Posterior cingulate gyrus (tissue), 11 donors: ENCODE measurements at regions of chr2 and their contacts with region 1.

Region 1: GRCh38 chr2:191501561-191502168 is 176.3 kb upstream of the NABP1 start:
- DNase-seq: no peak

Region 2: GRCh38 chr2:191165176-191165643 is 336.5 kb before region 1 on chr2:
- intact Hi-C with region 1: loop called (anchors 1 kb)
- DNase-seq: no peak

Region 3: DNA sequence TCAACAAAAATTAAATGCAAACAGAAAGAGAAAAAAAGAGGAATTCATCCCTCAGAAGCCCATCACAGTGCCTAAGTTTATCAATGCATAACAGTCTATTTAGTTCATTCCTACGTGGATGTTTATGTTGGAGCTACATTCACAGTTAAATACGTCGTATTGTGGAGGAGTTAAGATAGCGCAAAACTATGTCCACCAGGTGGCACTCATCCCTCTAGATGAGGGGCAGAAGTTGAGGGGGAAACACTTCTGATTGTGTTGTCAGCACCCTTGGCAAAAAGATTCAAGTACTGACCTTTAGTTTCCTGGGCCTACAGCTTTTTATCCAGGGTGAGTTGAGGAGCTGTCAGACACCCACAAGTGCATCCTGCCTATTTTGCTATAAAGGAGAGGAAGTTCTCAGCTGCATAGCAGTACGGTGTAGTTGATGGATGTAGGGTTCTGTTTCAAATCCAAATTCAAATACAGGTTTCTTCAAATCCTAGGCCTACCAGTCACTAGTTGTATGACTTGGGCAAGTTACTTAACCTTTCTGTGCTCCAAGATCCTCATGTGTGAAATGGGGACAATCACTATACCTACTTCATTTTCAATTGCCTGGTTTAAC is 283.3 kb before region 1 on chr2:
- intact Hi-C with region 1: loop called (anchors 5 kb)
- DNase-seq: peak in 3 of 10 donors; percentile 30 to 41 (median 36)

Region 4: GRCh38 chr2:191478799-191479679 is 22.6 kb before region 1 on chr2:
- intact Hi-C with region 1: no loop called
- DNase-seq: no peak